ENCODE measurements at regions of chr11 and their contacts with region 1.

Region 1: GRCh38 chr11:15074206-15075161 is 1.1 kb downstream of the CALCB start:
- DNase-seq: peak; percentile 75 to 83
- ATAC-seq: peak; percentile 85 to 94 (median 92)
- H3K4me3 ChIP-seq: peak overlapping the region in 9 of 10 donors; percentile 9 to 46 (median 37)
- H3K27ac ChIP-seq: no peak overlapping the region
- H3K4me1 ChIP-seq: peaks cover 10 to 21% (median 14%) of the 10 kb centered on the region in 9 donors
- H3K27me3 ChIP-seq: peaks cover 0 to 60% (median 48%) of the 10 kb centered on the region in 7 donors
- CTCF ChIP-seq: peak; percentile 42 to 83 (median 75)

Region 2: GRCh38 chr11:14537134-14537599 is 537.3 kb before region 1 on chr11:
- intact Hi-C with region 1: loop called in 3 of 10 experiments (anchors 10 kb)
- DNase-seq: peak in 1 of 2 donors; percentile 28
- ATAC-seq: no peak
- H3K4me3 ChIP-seq: peak overlapping the region in 1 of 10 donors; percentile 24
- H3K27ac ChIP-seq: peak overlapping the region in 4 of 10 donors; percentile 46 to 72 (median 58)
- H3K4me1 ChIP-seq: peaks cover 0 to 51% (median 44%) of the 10 kb centered on the region in 9 donors
- H3K27me3 ChIP-seq: no peaks in the 10 kb centered on the region
- CTCF ChIP-seq: peak; percentile 66 to 84 (median 79)

Region 3: GRCh38 chr11:14789879-14790484 is 284.5 kb before region 1 on chr11:
- intact Hi-C with region 1: loop called in 1 of 10 experiments (anchors 5 kb)
- DNase-seq: no peak
- ATAC-seq: no peak
- H3K4me3 ChIP-seq: no peak overlapping the region
- H3K27ac ChIP-seq: no peak overlapping the region
- H3K4me1 ChIP-seq: peaks cover 0 to 10% (median 0%) of the 10 kb centered on the region in 9 donors
- H3K27me3 ChIP-seq: no peaks in the 10 kb centered on the region
- CTCF ChIP-seq: peak in 7 of 9 donors; percentile 34 to 60 (median 48)

Region 4: DNA sequence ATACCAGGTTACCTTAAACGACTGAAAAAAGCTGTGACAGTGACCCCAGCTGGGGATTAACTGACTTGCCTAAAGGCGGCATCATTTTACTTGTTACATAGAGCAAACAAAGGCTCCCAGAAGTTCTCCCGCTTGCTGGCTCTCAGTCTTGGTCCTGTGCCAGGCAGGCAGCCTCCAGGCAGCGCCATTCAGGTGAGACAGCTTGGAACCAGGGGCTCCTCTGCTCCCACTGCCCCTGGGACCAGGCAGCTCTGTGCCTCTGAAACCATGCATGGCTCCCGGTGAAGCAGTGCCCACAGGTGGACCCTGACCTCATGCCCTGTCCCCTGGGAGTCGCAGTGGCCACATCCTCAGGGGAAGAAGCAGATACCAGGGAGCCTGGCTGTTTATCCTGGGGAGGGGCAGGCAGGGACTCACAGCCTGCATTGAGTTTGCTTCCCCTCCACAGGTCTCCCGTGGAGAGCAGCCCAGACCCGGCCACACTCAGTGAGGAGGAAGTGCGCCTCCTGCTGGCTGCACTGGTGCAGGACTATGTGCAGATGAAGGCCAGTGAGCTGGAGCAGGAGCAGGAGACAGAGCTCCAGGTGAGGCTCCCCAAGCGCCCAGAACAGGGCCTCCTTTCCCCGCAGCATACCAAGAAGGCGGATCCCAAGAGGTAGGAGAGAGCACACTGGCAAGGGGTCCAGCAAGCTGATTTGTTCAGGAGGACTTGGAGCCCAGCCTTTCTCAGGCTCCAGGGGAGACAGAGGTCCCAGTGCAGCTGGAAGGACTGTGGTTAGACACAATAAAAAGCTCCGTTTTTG is 166.9 kb before region 1 on chr11:
- intact Hi-C with region 1: loop called in 8 of 10 experiments (anchors 2 to 10 kb)
- DNase-seq: peak; percentile 64 to 83
- ATAC-seq: peak; percentile 40 to 75 (median 72)
- H3K4me3 ChIP-seq: no peak overlapping the region
- H3K27ac ChIP-seq: no peak overlapping the region
- H3K4me1 ChIP-seq: peaks cover 0 to 19% (median 12%) of the 10 kb centered on the region in 9 donors
- H3K27me3 ChIP-seq: peaks cover 0 to 8% (median 0%) of the 10 kb centered on the region in 7 donors
- CTCF ChIP-seq: peak; percentile 52 to 90 (median 76)

Region 5: GRCh38 chr11:14914541-14914940 is 159.9 kb before region 1 on chr11:
- intact Hi-C with region 1: loop called in 8 of 10 experiments (anchors 2 to 10 kb)
- DNase-seq: no peak
- ATAC-seq: no peak
- H3K4me3 ChIP-seq: no peak overlapping the region
- H3K27ac ChIP-seq: no peak overlapping the region
- H3K4me1 ChIP-seq: no peaks in the 10 kb centered on the region
- H3K27me3 ChIP-seq: peaks cover 0 to 15% (median 0%) of the 10 kb centered on the region in 7 donors
- CTCF ChIP-seq: no peak

Region 6: DNA sequence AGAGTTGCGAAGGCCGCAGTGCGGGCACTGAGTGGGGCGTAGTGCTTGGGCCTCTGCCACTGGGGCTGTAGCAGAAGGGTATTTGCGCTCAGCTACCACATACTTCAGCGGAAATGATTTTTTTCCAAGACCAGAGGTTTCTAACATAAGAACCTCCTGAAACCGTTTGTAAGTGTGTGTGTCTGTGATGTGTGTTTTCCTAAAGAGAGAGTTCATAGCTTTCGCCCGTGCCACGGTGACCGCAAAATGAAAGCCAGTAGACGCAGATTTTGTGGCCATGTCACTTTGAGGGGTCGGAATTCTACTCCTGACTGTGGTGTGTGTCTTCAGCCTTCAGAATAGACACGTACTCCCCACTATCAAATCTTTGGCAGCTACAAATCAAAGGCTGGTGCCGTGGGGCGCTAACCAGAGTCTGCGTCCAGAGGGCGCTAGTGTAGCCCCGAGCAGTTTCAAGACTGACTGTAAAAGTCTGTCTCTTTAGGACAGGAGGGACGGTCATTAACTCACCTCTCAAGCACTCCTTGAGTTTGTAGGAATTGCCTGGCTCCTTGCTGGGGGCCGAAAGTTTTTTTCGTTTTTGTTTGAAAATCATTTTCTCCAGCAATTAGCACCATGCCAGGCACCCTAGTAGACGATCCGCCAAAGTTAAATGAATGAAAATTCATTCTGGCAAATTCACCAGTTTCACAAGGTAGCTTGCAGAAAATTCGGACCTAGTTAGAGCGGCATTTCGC is 99.8 kb before region 1 on chr11:
- intact Hi-C with region 1: loop called in 6 of 10 experiments (anchors 5 to 10 kb)
- DNase-seq: peak in 1 of 2 donors; percentile 26
- ATAC-seq: peak in 7 of 8 donors; percentile 39 to 86 (median 67)
- H3K4me3 ChIP-seq: peak overlapping the region in 9 of 10 donors; percentile 9 to 42 (median 35)
- H3K27ac ChIP-seq: no peak overlapping the region
- H3K4me1 ChIP-seq: peaks cover 2 to 39% (median 26%) of the 10 kb centered on the region in 9 donors
- H3K27me3 ChIP-seq: peaks cover 27 to 95% (median 86%) of the 10 kb centered on the region in 7 donors
- CTCF ChIP-seq: peak in 8 of 9 donors; percentile 9 to 64 (median 58)

Region 7: GRCh38 chr11:15093432-15093831 is 18.9 kb after region 1 on chr11:
- intact Hi-C with region 1: no loop called
- DNase-seq: no peak
- ATAC-seq: no peak
- H3K4me3 ChIP-seq: no peak overlapping the region
- H3K27ac ChIP-seq: no peak overlapping the region
- H3K4me1 ChIP-seq: no peaks in the 10 kb centered on the region
- H3K27me3 ChIP-seq: peaks cover 0 to 26% (median 0%) of the 10 kb centered on the region in 7 donors
- CTCF ChIP-seq: no peak

Measured in heart right ventricle (tissue), 16 donors.